Right cardiac atrium (tissue), 5 donors: ENCODE measurements at regions of chr6 and their contacts with region 1.

Region 1: DNA sequence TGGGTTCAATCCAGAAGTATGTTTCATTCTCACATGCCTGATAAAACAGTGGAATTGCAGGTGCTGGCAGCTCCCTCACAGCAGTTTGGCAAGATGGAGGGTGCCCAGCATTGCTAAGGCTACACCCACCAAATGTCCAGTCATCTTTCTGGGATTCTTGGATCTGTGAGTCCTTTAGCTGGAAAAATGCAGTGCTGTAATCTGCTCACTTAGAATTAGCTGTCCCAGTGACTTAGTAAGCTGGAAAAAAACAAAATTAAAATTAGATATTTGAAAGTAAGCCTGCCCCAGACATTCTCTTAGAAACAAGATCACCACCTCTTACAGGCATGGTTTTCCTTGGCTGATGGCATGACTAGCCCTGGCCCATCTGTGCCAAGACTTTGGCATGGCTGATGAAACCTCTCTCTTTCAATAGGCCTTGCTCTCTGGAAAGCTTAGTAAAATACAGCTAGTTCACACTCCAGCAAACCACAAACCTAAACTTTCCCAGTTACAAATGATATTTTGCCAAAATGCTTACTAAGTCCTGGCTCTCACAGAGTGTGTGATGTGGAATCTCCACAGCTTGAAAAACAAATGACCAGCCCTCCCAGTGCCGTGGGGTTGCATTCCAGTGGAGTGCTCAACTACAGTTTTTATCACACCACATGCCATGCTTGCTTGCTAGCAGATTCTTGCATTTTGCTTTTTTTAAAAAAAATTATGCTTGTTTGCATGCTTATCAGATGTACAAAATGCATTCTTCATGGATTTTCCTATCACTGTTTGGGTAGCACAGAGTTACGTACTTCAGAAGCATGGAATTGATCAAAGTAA is 261.5 kb downstream of the EYA4 start:
- DNase-seq: peak; percentile 38 to 72 (median 66)
- ATAC-seq: peak; percentile 83 to 89
- H3K4me3 ChIP-seq: no peak overlapping the region
- H3K27ac ChIP-seq: peak overlapping the region; percentile 96
- H3K4me1 ChIP-seq: peaks cover 1% of the 10 kb centered on the region
- H3K27me3 ChIP-seq: no peaks in the 10 kb centered on the region

Region 2: GRCh38 chr6:133184798-133185372 is 317.8 kb before region 1 on chr6:
- intact Hi-C with region 1: loop called in 2 of 4 experiments (anchors 10 kb)
- DNase-seq: no peak
- ATAC-seq: no peak
- H3K4me3 ChIP-seq: no peak overlapping the region
- H3K27ac ChIP-seq: no peak overlapping the region
- H3K4me1 ChIP-seq: no peaks in the 10 kb centered on the region
- H3K27me3 ChIP-seq: no peaks in the 10 kb centered on the region

Region 3: DNA sequence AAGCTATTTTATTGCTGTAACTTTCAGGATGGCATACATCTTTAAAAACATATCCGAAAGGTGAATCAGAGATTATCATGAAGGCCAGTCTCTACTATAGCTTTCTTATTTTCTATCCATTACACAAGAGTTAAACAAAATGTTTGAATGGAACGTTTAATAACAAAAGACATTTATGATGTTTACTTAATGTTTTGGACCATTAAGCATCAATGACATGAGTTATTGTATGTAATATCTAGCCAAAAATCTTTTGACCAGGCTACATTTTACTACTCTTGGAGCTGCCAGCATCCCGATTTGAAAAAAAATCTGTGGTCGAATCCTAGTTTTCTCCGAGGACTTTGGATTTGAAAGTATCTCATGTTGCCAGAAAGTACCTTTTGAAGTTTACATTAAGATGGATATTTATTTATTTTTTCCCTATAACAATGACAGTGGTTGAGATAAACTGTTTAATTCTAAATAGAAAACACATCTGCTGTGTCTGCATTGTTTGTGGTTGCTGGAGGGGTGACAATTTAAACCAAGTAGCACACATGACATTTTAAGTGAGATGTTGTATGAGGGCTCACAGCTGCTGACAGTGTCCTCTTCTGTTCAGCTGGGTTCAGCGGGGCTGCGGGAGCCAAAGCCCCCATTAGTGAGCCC is 92.6 kb after region 1 on chr6:
- intact Hi-C with region 1: no loop called
- DNase-seq: no peak
- ATAC-seq: no peak
- H3K4me3 ChIP-seq: no peak overlapping the region
- H3K27ac ChIP-seq: no peak overlapping the region
- H3K4me1 ChIP-seq: no peaks in the 10 kb centered on the region
- H3K27me3 ChIP-seq: no peaks in the 10 kb centered on the region

Region 4: DNA sequence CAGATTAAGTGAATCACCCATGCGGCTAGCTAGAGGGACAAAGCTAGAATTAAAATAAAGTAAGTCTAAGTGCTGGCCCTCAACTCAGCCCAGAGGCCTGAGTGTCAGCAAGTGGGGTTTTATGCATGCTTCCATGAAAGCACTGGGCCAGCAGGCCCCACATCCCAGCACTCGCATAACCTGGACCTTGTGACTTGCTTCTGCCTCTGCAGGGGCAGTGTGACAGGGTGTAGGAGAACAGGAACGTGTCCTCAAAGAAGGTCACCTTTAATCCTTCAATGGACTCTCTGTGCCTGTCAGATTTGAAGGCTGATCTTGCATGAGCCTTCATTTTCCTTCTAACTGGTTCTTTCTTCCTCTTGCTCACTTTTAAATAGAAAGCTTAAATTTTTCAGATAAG is 1263.8 kb after region 1 on chr6:
- intact Hi-C with region 1: no loop called
- DNase-seq: no peak
- ATAC-seq: no peak
- H3K4me3 ChIP-seq: no peak overlapping the region
- H3K27ac ChIP-seq: no peak overlapping the region
- H3K4me1 ChIP-seq: no peaks in the 10 kb centered on the region
- H3K27me3 ChIP-seq: no peaks in the 10 kb centered on the region